ENCODE measurements at regions of chr7 and their contacts with region 1.

Region 1: DNA sequence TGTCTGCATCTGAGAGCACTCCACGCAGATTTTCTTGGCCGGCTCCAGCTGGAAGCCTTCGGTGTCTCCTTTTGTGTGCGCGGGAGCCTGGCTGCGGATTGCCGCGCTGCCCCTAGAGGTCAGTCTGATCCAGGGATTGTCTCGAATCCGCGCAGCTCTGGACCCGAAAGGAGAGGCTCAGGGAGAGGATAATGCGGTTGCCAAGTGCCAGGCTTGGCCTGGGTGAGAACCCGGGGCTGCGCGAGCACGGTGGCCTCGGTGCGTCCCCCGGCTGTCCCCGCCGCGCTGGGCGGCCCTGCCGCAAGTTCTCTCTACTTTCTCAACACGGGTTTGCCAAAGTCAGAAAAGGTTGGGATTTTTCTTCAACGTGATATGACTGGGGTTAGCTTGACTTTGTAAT is 140.9 kb downstream of the ADCYAP1R1 start:
- DNase-seq: peak; percentile 95
- H3K4me3 ChIP-seq: no peak overlapping the region
- H3K27ac ChIP-seq: peak overlapping the region; percentile 41
- H3K4me1 ChIP-seq: peaks cover 11% of the 10 kb centered on the region
- H3K27me3 ChIP-seq: no peaks in the 10 kb centered on the region
- CTCF ChIP-seq: peak; percentile 97

Region 2: DNA sequence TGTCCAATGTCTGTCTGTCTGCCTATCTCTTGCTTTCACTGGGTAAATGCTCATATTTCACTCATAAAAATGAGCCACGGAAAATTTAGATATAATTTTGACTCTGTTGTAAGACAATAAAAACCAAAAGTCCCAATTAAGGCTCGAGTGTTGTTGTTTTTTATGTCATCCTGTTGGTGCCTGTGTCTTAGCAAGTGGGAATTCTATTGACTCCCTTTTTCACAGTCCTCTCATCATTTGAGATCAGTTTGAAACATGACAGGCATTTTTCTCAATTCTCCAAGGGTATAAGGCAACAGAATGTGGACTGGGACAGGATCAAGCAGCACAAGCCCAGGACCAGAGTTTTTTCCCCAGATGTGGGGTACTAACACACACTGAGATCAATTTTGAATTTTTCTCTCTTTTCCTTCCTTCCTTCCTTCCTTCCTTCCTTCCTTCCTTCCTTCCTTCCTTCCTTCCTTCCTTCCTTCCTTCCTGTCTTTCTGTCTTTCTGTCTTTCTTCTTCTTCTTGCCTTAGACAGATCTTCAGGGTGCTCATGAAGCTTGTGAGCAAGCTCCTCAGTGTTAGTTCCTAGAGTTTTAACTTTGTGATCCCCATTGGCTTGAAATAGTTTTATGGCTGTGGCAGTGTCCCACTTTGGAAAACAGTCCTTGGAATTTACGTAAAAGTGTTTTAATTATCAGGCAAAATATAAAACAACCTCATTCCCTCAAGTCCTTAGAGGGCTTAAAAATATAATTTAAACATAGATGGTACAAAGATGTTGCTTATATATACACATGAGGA is 150.7 kb after region 1 on chr7:
- CTCF ChIA-PET with region 1: no interaction called
- POLR2A ChIA-PET with region 1: no interaction called
- intact Hi-C with region 1: loop called (anchors 1 kb)
- DNase-seq: peak; percentile 89
- H3K4me3 ChIP-seq: peak overlapping the region; percentile 7
- H3K27ac ChIP-seq: peak overlapping the region; percentile 88
- H3K4me1 ChIP-seq: peaks cover 61% of the 10 kb centered on the region
- H3K27me3 ChIP-seq: no peaks in the 10 kb centered on the region
- CTCF ChIP-seq: no peak

Region 3: GRCh38 chr7:31373337-31374289 is 180.6 kb after region 1 on chr7:
- CTCF ChIA-PET with region 1: interaction called, 6 read pairs
- POLR2A ChIA-PET with region 1: no interaction called
- intact Hi-C with region 1: loop called (anchors 1 kb)
- DNase-seq: peak; percentile 85
- H3K4me3 ChIP-seq: no peak overlapping the region
- H3K27ac ChIP-seq: peak overlapping the region; percentile 10
- H3K4me1 ChIP-seq: peaks cover 9% of the 10 kb centered on the region
- H3K27me3 ChIP-seq: no peaks in the 10 kb centered on the region
- CTCF ChIP-seq: peak; percentile 85

Region 4: GRCh38 chr7:31443457-31443856 is 250.5 kb after region 1 on chr7:
- CTCF ChIA-PET with region 1: interaction called, 3 read pairs
- POLR2A ChIA-PET with region 1: interaction called, 3 read pairs
- intact Hi-C with region 1: loop called (anchors 2 kb)
- DNase-seq: peak; percentile 89
- H3K4me3 ChIP-seq: no peak overlapping the region
- H3K27ac ChIP-seq: peak overlapping the region; percentile 54
- H3K4me1 ChIP-seq: peaks cover 21% of the 10 kb centered on the region
- H3K27me3 ChIP-seq: no peaks in the 10 kb centered on the region
- CTCF ChIP-seq: peak; percentile 83

Region 5: GRCh38 chr7:31488562-31489203 is 295.7 kb after region 1 on chr7:
- CTCF ChIA-PET with region 1: interaction called, 6 read pairs
- POLR2A ChIA-PET with region 1: no interaction called
- intact Hi-C with region 1: loop called (anchors 1 kb)
- DNase-seq: peak; percentile 83
- H3K4me3 ChIP-seq: no peak overlapping the region
- H3K27ac ChIP-seq: no peak overlapping the region
- H3K4me1 ChIP-seq: peaks cover 15% of the 10 kb centered on the region
- H3K27me3 ChIP-seq: no peaks in the 10 kb centered on the region
- CTCF ChIP-seq: peak; percentile 91

Region 6: DNA sequence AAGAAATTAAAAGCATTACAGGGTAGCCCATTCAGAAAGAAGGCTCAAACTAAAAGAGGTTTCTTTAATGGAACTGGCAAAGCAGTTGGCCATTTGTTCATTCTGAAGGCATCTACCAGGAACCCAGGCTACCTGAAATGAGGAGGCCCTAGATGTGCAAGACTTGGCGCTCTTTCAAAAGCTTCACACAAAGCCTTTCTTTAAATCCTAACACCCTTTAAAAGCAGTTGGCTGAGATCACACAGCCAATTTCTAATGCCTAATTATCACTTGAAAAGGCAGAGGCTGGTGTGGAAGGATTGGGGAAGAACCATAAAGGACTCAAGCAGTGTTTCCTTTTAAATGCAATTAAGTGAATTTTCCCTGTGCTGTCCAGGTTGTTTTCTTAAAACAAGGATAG is 517.2 kb after region 1 on chr7:
- CTCF ChIA-PET with region 1: no interaction called
- POLR2A ChIA-PET with region 1: no interaction called
- intact Hi-C with region 1: no loop called
- DNase-seq: no peak
- H3K4me3 ChIP-seq: no peak overlapping the region
- H3K27ac ChIP-seq: no peak overlapping the region
- H3K4me1 ChIP-seq: no peaks in the 10 kb centered on the region
- H3K27me3 ChIP-seq: peaks cover 17% of the 10 kb centered on the region
- CTCF ChIP-seq: no peak